AG04449 (cell line): ENCODE measurements at regions of chr16 and their contacts with region 1.

Region 1: GRCh38 chr16:67883872-67884261 is 818 bp upstream of the NRN1L start:
- DNase-seq: no peak
- H3K4me3 ChIP-seq: no peak overlapping the region
- CTCF ChIP-seq: peak; percentile 88

Region 2: GRCh38 chr16:67672739-67673662 is 210.9 kb before region 1 on chr16:
- CTCF ChIA-PET with region 1: interaction called, 13 read pairs
- POLR2A ChIA-PET with region 1: no interaction called
- DNase-seq: peak; percentile 14
- H3K4me3 ChIP-seq: no peak overlapping the region
- CTCF ChIP-seq: peak; percentile 72

Region 3: GRCh38 chr16:67865316-67865715 is 18.6 kb before region 1 on chr16:
- CTCF ChIA-PET with region 1: interaction called, 33 read pairs
- POLR2A ChIA-PET with region 1: interaction called, 5 read pairs
- DNase-seq: no peak
- H3K4me3 ChIP-seq: no peak overlapping the region
- CTCF ChIP-seq: peak; percentile 49

Region 4: DNA sequence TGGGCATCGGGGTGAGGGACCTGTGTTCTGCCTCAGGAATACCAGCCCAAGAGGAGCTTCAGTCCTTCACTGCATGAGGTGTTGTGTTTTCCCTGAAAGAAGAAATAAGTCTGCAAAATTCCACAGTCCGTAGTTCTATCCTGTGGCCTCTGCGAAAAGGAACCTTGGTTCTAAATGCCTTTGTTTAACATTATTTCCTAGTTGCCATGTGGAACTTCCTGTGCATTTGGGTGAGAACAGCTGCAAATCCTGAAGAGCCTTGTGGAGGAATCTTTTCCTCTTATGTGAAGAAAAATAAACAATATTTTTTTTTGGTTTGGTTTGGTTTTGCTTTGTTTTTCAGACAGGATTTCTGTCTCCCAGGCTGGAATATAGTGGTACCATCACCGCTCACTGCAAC is 19.0 kb after region 1 on chr16:
- CTCF ChIA-PET with region 1: interaction called, 36 read pairs
- POLR2A ChIA-PET with region 1: no interaction called
- DNase-seq: no peak
- H3K4me3 ChIP-seq: no peak overlapping the region
- CTCF ChIP-seq: no peak

Region 5: GRCh38 chr16:67917852-67918236 is 34.0 kb after region 1 on chr16:
- CTCF ChIA-PET with region 1: interaction called, 14 read pairs
- POLR2A ChIA-PET with region 1: no interaction called
- DNase-seq: peak; percentile 44
- H3K4me3 ChIP-seq: no peak overlapping the region; the same call in 1 of the 2 replicates
- CTCF ChIP-seq: no peak

Region 6: DNA sequence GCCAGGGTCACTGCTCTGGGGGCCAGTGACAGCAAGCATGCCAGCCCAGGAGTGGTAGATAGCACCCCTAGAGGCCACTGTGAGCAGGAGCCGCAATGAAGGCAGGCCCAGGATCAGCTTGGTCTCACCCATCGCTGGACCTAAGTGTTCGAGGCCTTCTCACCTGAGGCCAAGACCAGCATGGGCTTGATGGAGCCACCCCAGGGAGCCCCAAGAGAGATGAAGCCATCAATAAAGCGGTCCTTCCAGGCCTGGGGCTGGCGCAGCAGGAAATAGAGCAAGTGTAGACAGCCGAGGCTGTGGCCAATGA is 58.3 kb after region 1 on chr16:
- CTCF ChIA-PET with region 1: interaction called, 10 read pairs
- POLR2A ChIA-PET with region 1: no interaction called
- DNase-seq: no peak
- H3K4me3 ChIP-seq: no peak overlapping the region
- CTCF ChIP-seq: peak; percentile 73

Region 7: DNA sequence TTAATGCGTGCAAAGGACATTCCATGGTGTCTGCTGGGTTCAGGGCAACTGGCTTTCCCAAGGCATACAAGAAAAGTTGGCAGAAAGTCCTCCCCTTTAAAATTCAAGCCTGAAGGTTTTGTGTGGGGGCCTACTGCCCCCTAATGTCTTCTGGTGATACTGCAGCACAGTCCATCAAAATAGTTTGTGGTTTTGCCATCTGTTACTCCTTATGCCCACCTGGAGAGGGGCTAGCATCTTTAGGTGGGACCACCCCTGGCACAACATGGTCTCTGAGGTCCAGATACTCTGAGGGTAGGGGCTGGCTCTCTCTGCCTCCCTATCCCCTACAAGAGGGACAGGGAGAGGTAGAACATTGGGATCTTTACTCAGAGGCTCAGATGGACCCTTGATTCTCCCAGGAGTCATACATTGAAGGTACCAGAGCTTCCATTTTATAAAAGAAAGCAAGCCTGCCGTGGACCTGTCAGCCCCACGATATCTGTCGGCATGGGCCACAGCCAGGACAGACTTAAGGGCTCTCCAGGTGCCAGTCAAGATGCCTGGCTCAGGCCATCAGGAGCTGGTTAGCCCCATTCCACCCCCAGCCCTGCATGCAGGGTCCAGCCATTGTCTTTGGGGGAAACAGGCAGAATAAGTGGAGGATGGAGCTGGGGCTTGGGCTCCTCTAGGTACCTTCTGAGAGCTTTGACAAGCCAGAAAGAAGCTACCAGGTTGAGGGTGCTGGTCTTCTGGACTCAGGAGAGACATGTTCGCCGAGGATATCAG is 345.7 kb after region 1 on chr16:
- CTCF ChIA-PET with region 1: interaction called, 15 read pairs
- POLR2A ChIA-PET with region 1: no interaction called
- DNase-seq: peak; percentile 31
- H3K4me3 ChIP-seq: no peak overlapping the region
- CTCF ChIP-seq: peak; percentile 73